Heart left ventricle (tissue), 16 donors: ENCODE measurements at regions of chr11 and their contacts with region 1.

Region 1: DNA sequence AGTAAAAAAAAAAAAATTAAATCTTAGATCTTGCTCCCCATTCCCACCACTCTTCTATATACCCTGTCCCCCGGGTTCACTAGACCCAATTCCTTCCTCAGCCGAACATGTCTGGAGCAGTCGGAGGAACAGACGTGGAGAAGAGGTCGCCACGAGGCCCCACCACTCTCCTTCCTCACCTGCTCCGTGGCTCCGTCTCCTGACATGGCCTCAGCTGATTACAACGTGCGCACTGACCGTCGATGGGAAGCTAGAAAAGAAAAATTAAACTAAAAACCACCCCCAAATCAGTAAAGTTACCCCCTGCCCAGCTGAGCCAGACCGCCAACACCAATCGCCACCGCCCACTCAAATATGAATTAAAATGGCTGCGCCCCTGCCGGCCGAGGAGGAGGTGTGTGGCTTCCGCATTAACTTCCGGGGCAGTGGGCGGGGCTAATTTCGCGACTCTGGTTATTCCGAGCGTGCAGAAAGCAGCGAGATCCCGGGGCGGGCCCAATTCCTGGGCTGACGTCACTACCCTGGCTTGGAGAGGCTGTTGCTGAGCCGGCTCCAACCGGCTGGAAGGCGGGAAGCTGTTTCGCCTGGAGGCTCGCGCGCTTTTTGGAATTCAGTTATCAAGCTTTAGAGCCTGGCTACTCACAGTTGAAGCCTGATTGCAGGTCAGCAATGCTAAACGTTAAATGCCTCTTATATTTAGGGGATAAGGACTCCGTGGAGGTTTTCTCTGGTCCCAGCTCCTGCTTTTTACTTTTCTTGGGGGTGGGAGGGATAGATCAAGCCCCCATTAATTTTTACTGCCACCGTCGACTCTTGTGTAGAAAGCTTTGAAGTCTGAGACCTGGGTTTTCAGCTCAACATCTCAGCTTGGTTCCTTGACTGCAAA is at the start of gene CSTF3:
- DNase-seq: peak; percentile 100
- ATAC-seq: peak; percentile 98 to 100 (median 99)
- H3K4me3 ChIP-seq: peak within 1 kb of the TSS; percentile 60 to 94 (median 78)
- H3K27ac ChIP-seq: peak within 1 kb of the TSS in 11 of 12 donors; percentile 58 to 90 (median 75)
- H3K4me1 ChIP-seq: peaks cover 4 to 43% (median 19%) of the 10 kb centered on the region in 12 donors
- H3K27me3 ChIP-seq: no peaks in the 10 kb centered on the region
- CTCF ChIP-seq: peak; percentile 33 to 70 (median 60)
- POLR2A ChIP-seq: peak in 1 of 2 donors; percentile 57
- total RNA-seq, gene CSTF3: 5.9 to 15.6 (median 13.2) TPM

Region 2: GRCh38 chr11:33039274-33040032 is 121.9 kb before region 1 on chr11 and contains the start of gene TCP11L1:
- intact Hi-C with region 1: loop called in 1 of 10 experiments (anchors 5 kb)
- DNase-seq: peak; percentile 89 to 97 (median 94)
- ATAC-seq: peak; percentile 90 to 97 (median 95)
- H3K4me3 ChIP-seq: peak within 1 kb of the TSS; percentile 70 to 99 (median 86)
- H3K27ac ChIP-seq: peak within 1 kb of the TSS; percentile 86 to 99 (median 98)
- H3K4me1 ChIP-seq: peaks cover 0 to 25% (median 8%) of the 10 kb centered on the region in 12 donors
- H3K27me3 ChIP-seq: no peaks in the 10 kb centered on the region
- CTCF ChIP-seq: peak in 2 of 12 donors; percentile 3 to 21
- POLR2A ChIP-seq: peak in 1 of 2 donors; percentile 39
- total RNA-seq, gene TCP11L1: 4.8 to 13.9 (median 9.6) TPM

Region 3: GRCh38 chr11:33060271-33060670 is 101.1 kb before region 1 on chr11:
- intact Hi-C with region 1: no loop called
- DNase-seq: no peak
- ATAC-seq: no peak
- H3K4me3 ChIP-seq: no peak overlapping the region
- H3K27ac ChIP-seq: peak overlapping the region in 1 of 12 donors; percentile 5
- H3K4me1 ChIP-seq: peaks cover 0 to 27% (median 2%) of the 10 kb centered on the region in 12 donors
- H3K27me3 ChIP-seq: no peaks in the 10 kb centered on the region
- CTCF ChIP-seq: no peak
- POLR2A ChIP-seq: no peak

Region 4: DNA sequence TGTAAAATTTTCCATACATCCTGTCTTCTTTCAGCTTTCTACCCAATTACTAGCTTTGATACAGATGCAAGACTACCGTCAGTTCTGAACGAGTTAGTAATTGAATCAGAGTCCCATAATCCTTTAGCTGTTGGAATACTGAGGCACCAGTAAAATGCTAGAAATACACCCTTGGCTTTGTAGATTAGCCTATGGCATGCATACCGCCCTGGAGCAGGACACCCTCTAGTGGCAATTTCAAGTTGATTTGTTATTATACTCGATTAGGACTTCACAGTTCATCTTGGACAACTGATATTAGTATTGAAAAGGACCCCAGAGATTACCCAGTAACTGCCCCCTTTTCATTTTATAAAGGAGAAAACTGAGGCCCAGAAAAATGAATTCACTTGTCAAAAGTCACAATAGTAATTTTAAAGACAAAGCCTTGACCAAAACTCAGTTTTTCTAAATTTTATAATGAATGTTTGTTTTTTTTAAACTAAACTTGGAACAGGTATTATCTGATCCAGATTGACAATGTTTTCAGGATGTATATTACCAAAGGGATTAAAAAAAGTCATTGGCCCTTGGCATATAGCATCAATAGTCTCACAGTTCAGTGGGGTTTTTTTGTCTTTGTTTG is 168.5 kb after region 1 on chr11:
- intact Hi-C with region 1: loop called in 8 of 10 experiments (anchors 2 to 5 kb)
- DNase-seq: peak in 3 of 5 donors; percentile 33 to 46 (median 40)
- ATAC-seq: peak in 3 of 4 donors; percentile 68 to 83 (median 68)
- H3K4me3 ChIP-seq: no peak overlapping the region
- H3K27ac ChIP-seq: peak overlapping the region in 2 of 12 donors; percentile 4 to 15
- H3K4me1 ChIP-seq: peaks cover 14 to 95% (median 60%) of the 10 kb centered on the region in 12 donors
- H3K27me3 ChIP-seq: no peaks in the 10 kb centered on the region
- CTCF ChIP-seq: peak; percentile 52 to 79 (median 64)
- POLR2A ChIP-seq: no peak

Region 5: DNA sequence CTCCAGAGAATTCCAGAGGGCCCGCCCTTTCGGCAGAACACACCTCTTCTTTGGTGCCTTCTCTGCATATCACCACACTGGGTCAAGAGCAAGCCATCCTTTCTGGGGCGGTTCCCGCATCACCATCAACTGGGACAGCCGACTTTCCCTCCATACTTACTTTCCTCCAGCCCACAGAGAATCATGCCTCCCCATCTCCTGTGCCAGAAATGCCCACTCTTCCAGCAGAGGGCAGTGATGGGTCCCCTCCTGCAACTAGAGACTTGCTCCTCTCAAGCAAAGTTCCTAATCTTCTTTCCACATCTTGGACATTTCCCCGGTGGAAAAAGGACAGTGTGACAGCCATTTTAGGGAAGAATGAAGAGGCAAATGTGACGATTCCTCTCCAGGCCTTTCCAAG is 381.6 kb after region 1 on chr11:
- intact Hi-C with region 1: loop called in 2 of 10 experiments (anchors 5 kb)
- DNase-seq: peak in 3 of 5 donors; percentile 36 to 44 (median 40)
- ATAC-seq: peak in 2 of 4 donors; percentile 46
- H3K4me3 ChIP-seq: no peak overlapping the region
- H3K27ac ChIP-seq: no peak overlapping the region
- H3K4me1 ChIP-seq: peaks cover 0 to 16% (median 2%) of the 10 kb centered on the region in 12 donors
- H3K27me3 ChIP-seq: peaks cover 0 to 3% (median 0%) of the 10 kb centered on the region in 9 donors
- CTCF ChIP-seq: peak; percentile 38 to 63 (median 56)
- POLR2A ChIP-seq: no peak

Region 6: DNA sequence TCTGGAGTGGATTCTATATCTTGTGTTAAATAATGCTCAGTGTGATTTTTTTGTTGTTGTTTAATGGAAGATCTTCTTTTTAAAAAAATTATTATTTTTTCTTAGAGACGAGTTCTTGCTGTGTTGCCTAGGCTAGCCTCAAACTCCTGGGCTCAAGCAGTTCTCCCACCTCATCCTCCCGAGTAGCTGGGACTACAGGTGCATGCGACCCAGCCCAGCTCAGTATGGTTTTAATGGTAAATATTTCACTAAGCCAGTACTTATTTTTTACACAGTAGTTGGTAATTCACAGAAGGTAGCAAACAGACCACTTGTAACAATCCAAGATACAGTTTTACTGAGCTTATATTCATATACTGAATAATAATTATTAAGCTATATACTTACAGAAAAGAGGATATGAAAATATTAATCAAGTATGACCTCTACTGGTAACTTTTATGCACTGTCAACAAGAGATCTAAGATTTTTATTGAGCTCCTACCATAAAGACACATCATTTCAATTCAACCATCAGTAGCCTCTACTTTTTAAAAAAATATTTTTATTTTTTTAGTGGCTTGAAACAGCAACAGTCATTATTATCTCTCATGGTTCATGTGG is 581.0 kb after region 1 on chr11:
- intact Hi-C with region 1: loop called in 2 of 10 experiments (anchors 10 kb)
- DNase-seq: no peak
- ATAC-seq: peak in 3 of 4 donors; percentile 14 to 49 (median 39)
- H3K4me3 ChIP-seq: no peak overlapping the region
- H3K27ac ChIP-seq: peak overlapping the region in 2 of 12 donors; percentile 1 to 58
- H3K4me1 ChIP-seq: peaks cover 0 to 30% (median 10%) of the 10 kb centered on the region in 12 donors
- H3K27me3 ChIP-seq: no peaks in the 10 kb centered on the region
- CTCF ChIP-seq: peak; percentile 32 to 76 (median 60)
- POLR2A ChIP-seq: no peak

Region 7: DNA sequence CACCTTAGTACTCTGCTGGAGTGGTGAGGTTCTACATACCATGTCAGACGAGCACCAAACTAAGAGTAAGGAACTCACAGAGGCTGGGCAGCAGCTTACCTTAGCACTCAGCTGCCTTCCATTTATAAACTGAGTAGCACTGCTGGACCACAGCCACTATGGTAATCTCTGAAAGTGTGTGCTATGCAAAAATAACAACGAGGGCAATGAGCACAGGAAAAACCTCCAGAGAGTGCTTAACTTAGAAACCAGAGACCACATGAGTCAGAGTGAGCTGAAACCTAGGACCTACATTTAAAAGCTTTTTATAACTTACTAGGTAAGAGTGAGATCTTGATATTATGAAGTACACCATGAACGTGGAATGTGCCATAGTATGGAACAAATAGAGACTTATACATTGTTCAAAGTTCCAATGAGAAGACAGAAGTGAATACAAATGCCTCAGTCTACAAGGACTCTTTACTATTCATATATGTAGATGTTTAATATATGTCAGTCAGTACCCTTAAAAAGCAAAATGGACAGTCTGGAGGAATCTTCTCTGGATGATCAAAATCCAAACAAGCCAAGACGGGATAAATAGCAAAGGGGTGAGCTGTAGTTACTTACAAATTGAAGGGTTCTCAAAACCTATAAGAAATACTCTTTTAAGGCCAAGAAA is 592.1 kb after region 1 on chr11:
- intact Hi-C with region 1: loop called in 3 of 10 experiments (anchors 10 kb)
- DNase-seq: peak in 4 of 5 donors; percentile 53 to 63 (median 58)
- ATAC-seq: peak; percentile 94 to 96 (median 96)
- H3K4me3 ChIP-seq: peak overlapping the region in 3 of 12 donors; percentile 2 to 18 (median 15)
- H3K27ac ChIP-seq: peak overlapping the region; percentile 49 to 78 (median 68)
- H3K4me1 ChIP-seq: peaks cover 0 to 25% (median 5%) of the 10 kb centered on the region in 12 donors
- H3K27me3 ChIP-seq: no peaks in the 10 kb centered on the region
- CTCF ChIP-seq: no peak
- POLR2A ChIP-seq: no peak

Region 8: DNA sequence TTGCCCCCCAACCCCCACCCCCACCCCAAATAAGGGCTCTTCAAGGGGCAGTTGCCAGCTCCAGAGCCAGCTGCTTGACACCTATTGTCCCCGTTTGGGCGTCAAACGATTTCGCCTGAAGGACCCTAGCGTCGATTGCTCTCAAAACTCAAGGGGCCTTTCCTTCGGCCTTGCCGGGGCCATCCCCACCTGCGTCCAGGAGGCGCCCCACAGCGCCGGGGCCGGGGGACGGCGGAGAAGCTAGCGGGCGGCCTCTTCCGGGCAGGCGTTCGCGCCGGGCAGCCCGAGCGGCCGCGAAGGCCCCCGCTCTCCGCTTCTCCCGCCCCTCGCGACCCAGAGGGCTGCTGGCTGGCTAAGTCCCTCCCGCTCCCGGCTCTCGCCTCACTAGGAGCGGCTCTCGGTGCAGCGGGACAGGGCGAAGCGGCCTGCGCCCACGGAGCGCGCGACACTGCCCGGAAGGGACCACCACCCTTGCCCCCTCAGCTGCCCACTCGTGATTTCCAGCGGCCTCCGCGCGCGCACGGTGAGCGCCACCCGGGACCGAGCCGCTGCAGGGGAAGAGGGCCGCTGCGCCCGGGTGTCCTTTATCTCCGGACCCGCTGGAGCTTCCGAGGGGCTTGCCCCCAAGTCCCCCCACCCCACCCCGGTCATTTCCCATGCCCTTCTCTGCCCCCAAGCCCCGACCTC is 890.1 kb after region 1 on chr11 and contains the start of gene CAPRIN1:
- intact Hi-C with region 1: loop called in 1 of 10 experiments (anchors 5 kb)
- DNase-seq: peak; percentile 89 to 95 (median 92)
- ATAC-seq: peak; percentile 81 to 94 (median 90)
- H3K4me3 ChIP-seq: peak within 1 kb of the TSS; percentile 90 to 99 (median 94)
- H3K27ac ChIP-seq: peak within 1 kb of the TSS; percentile 96 to 100 (median 99)
- H3K4me1 ChIP-seq: peaks cover 0 to 45% (median 37%) of the 10 kb centered on the region in 12 donors
- H3K27me3 ChIP-seq: no peaks in the 10 kb centered on the region
- CTCF ChIP-seq: peak in 1 of 12 donors; percentile 14
- POLR2A ChIP-seq: peak in 1 of 2 donors; percentile 69
- total RNA-seq, gene CAPRIN1: 94.2 to 134 (median 114) TPM